Left cardiac atrium (tissue), 4 donors: ENCODE measurements at regions of chr1 and their contacts with region 1.

Region 1: DNA sequence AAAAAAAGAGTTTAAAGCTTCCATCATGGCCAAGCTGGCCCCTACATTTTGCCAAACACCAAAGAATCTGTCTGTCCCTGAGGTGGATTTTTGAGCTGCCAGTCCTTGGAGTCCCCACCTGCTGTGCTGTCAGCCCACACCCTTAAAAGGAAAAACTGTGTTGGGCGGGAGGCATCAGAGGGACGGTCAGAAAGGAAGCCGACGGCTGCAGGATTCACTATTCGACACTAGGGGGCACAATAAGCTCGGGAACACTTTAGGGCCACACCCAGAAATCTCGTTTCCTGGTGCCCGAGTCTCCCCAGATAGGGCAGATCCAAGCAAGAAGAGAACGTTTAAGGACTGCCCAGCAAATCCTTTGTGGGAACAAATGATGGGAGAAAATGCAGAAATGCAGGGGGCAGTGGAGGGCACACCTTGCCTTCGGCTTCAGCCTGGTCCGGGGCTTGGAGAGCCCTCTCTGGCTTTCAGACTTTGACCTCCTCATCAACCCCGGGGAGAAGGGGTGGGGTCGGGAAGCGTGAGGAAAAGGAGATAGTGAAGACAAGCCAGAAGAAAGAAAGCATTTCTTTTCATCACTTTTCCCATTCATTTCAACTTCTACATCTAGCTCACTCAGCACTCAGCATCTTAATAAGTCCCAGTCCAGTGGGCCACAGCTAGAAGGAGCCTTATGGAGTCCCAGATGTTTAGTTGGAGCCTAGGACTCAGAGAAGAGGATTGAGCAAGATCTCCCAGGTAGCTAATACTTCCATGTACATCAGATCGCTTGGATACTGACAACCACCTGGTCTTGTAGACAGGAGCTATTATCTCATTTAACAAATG is 5.0 kb upstream of the CTTNBP2NL start:
- DNase-seq: peak; percentile 89
- ATAC-seq: peak; percentile 83 to 91

Region 2: GRCh38 chr1:112466078-112466660 is 75.2 kb after region 1 on chr1:
- intact Hi-C with region 1: loop called (anchors 1 to 2 kb)
- DNase-seq: peak; percentile 98
- ATAC-seq: peak; percentile 92 to 93

Region 3: GRCh38 chr1:112706908-112707663 is 316.1 kb after region 1 on chr1 and contains the start of gene RHOC:
- intact Hi-C with region 1: loop called (anchors 5 kb)
- DNase-seq: peak; percentile 89
- ATAC-seq: peak; percentile 84 to 87
- total RNA-seq, gene RHOC: 146 to 235 TPM